ENCODE measurements at regions of chr9 and their contacts with region 1.

Region 1: GRCh38 chr9:129626079-129626624 is at the start of gene NTMT1:
- DNase-seq: peak; percentile 77 to 80
- ATAC-seq: peak; percentile 90
- H3K4me3 ChIP-seq: peak within 1 kb of the TSS; percentile 71 to 91 (median 77)
- H3K27ac ChIP-seq: peak within 1 kb of the TSS; percentile 90 to 98 (median 92)
- H3K4me1 ChIP-seq: peaks cover 44% of the 10 kb centered on the region in 2 donors
- H3K27me3 ChIP-seq: peaks cover 0 to 7% (median under 1%) of the 10 kb centered on the region in 3 donors
- CTCF ChIP-seq: peak in 2 of 5 experiments; percentile 45 to 53
- POLR2A ChIP-seq: peak; percentile 99
- total RNA-seq, gene NTMT1: 37.8 to 82.1 (median 48.1) TPM

Region 2: DNA sequence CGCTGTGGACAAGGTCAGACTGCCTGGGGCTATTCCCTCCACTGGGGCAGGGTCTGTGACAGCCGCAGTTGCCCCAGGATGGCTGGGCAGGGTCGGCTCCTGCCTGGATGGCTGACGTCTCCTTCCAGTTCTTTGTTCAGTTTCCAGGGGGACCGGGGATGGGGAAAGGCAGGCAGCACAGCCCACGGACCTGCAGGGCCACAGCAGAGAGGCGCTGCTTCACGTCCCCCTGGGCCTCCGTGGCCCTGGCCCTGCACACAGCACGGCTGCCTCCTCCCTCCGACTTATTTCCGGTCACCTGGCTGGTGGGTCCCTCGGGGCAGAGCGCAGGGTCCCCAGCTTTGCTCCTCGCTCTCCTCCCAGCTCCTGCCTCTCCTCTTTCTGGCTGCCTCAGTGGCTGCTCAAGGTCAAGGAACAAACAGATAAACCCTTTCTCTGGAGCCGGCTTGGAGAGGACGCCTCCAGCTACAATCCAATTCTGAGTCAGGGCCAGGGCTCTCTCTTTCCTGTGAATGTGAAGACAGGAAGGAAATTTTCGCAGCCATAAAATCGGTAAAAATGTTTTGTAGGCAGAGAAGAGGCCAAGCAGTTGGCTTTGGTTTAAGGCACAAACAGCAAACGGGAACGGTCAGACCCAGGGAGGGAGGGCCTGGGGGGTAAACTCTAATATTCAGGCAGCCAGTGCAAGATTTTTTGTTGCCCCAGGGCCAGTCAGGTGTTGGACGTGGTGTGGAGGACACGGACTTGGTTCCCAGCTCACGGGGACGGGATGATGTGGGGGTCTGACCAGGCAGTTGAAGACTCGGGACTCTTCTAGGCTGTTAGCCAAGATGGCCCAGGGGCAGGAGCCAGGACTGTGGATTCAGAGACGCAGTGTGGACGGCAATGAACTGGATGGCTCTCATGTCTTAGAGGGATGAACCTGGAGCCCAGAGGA is 174.8 kb before region 1 on chr9:
- in situ Hi-C with region 1: no loop called
- intact Hi-C with region 1: no loop called
- DNase-seq: no peak
- ATAC-seq: peak; percentile 33 to 39
- H3K4me3 ChIP-seq: no peak overlapping the region
- H3K27ac ChIP-seq: peak overlapping the region; percentile 11 to 66 (median 60)
- H3K4me1 ChIP-seq: peaks cover 7 to 10% of the 10 kb centered on the region in 2 donors
- H3K27me3 ChIP-seq: no peaks in the 10 kb centered on the region
- CTCF ChIP-seq: no peak
- POLR2A ChIP-seq: no peak

Region 3: GRCh38 chr9:129641746-129642513 is 15.8 kb after region 1 on chr9 and contains the start of gene ASB6:
- in situ Hi-C with region 1: no loop called
- intact Hi-C with region 1: loop called (anchors 1 kb)
- DNase-seq: peak; percentile 92 to 95
- ATAC-seq: peak; percentile 88 to 92
- H3K4me3 ChIP-seq: peak within 1 kb of the TSS; percentile 89 to 100 (median 96)
- H3K27ac ChIP-seq: peak within 1 kb of the TSS; percentile 80 to 94 (median 82)
- H3K4me1 ChIP-seq: peaks cover 15 to 21% of the 10 kb centered on the region in 2 donors
- H3K27me3 ChIP-seq: no peaks in the 10 kb centered on the region
- CTCF ChIP-seq: peak; percentile 95 to 100 (median 100)
- POLR2A ChIP-seq: peak; percentile 38 to 71
- total RNA-seq, gene ASB6: 14.4 to 24.0 (median 19.4) TPM

Measured in gastrocnemius medialis (tissue), 4 donors.